ENCODE measurements at regions of chr12 and their contacts with region 1.

Region 1: GRCh38 chr12:4012977-4013968 is 140.1 kb upstream of the PARP11 start:
- DNase-seq: no peak
- ATAC-seq: no peak
- H3K4me3 ChIP-seq: no peak overlapping the region
- H3K4me3 Mint-ChIP-seq: no peak overlapping the region
- H3K27ac ChIP-seq: no peak overlapping the region
- H3K27ac Mint-ChIP-seq: peak overlapping the region in 1 of 2 donors; percentile 16
- H3K4me1 ChIP-seq: no peaks in the 10 kb centered on the region
- H3K4me1 Mint-ChIP-seq: peaks cover 0 to 4% (median 0%) of the 10 kb centered on the region in 3 donors
- H3K27me3 ChIP-seq: peaks cover 0 to 3% of the 10 kb centered on the region in 2 experiments
- H3K27me3 Mint-ChIP-seq: peaks cover 0 to 2% of the 10 kb centered on the region in 2 donors

Region 2: GRCh38 chr12:4118017-4118510 is 104.8 kb after region 1 on chr12:
- CTCF ChIA-PET with region 1: no interaction called
- POLR2A ChIA-PET with region 1: interaction called in 1 of 2 experiments, 14 read pairs
- DNase-seq: peak in 11 of 35 experiments; percentile 8 to 59 (median 17)
- ATAC-seq: peak; percentile 53 to 69 (median 65)
- H3K4me3 ChIP-seq: peak overlapping the region in 1 of 2 donors; percentile 2
- H3K4me3 Mint-ChIP-seq: peak overlapping the region; percentile 50 to 75 (median 69)
- H3K27ac ChIP-seq: peak overlapping the region; percentile 47
- H3K27ac Mint-ChIP-seq: peak overlapping the region; percentile 14 to 72
- H3K4me1 ChIP-seq: peaks cover 19 to 49% of the 10 kb centered on the region in 2 experiments
- H3K4me1 Mint-ChIP-seq: peaks cover 39 to 53% (median 46%) of the 10 kb centered on the region in 3 donors
- H3K27me3 ChIP-seq: peaks cover 0 to 6% of the 10 kb centered on the region in 2 experiments
- H3K27me3 Mint-ChIP-seq: no peaks in the 10 kb centered on the region

Measured in T-cell (primary cell).